Heart right ventricle (tissue), 16 donors: ENCODE measurements at regions of chr16 and their contacts with region 1.

Region 1: GRCh38 chr16:10579965-10580882 is at the start of gene EMP2:
- DNase-seq: peak; percentile 86 to 89
- ATAC-seq: peak; percentile 87 to 92 (median 88)
- H3K4me3 ChIP-seq: peak within 1 kb of the TSS; percentile 80 to 98 (median 88)
- H3K27ac ChIP-seq: peak within 1 kb of the TSS; percentile 92 to 99 (median 97)
- H3K4me1 ChIP-seq: peaks cover 25 to 54% (median 44%) of the 10 kb centered on the region in 9 donors
- H3K27me3 ChIP-seq: peaks cover 0 to 32% (median 0%) of the 10 kb centered on the region in 7 donors
- CTCF ChIP-seq: peak; percentile 28 to 81 (median 64)
- total RNA-seq, gene EMP2: 44.6 to 108 (median 62.0) TPM

Region 2: DNA sequence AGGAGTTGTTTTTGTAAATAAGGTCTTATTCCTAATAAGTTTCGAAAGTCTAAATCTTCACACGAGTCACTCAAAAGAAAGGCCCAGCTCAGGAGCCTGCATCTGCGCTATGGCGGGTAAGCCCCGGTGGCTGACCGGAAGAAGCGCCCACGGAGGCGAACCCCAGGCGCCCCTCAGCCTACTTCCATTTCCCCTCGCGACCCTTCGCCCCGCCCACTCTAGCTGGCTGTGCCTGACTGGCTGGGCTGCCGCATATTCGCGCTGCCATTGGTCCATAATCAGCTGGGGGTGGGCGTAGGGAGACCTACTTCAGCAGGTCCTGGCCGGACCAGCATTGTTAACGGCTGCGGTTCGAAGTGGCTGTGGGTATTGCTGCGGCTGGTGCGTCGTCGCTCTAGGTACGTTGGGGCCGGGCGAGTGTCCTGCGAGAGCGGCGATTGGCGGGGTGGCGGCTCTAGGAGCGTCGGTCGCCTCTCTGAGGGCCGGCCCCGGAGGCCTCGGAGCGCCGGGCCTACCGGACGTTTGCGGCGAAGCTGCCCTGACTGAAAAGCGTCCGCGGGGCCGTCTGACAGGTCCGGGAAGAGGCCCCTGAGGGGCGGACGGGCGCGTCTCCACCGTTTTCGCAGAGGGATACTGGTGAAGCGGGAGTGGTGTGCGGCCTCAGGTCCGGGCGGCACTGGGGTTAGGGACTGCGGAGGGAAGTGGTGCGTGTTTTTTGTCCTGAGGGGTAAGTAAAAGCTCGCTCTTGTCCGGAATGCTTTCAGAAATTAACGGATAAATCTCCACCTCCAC is 194.3 kb before region 1 on chr16 and contains the start of gene ATF7IP2:
- intact Hi-C with region 1: no loop called
- DNase-seq: peak; percentile 91 to 95
- ATAC-seq: peak; percentile 97 to 100 (median 99)
- H3K4me3 ChIP-seq: peak within 1 kb of the TSS; percentile 49 to 82 (median 76)
- H3K27ac ChIP-seq: peak within 1 kb of the TSS; percentile 11 to 92 (median 86)
- H3K4me1 ChIP-seq: peaks cover 0 to 29% (median 12%) of the 10 kb centered on the region in 9 donors
- H3K27me3 ChIP-seq: no peaks in the 10 kb centered on the region
- CTCF ChIP-seq: no peak
- total RNA-seq, gene ATF7IP2: 19.4 to 62.6 (median 35.8) TPM

Region 3: DNA sequence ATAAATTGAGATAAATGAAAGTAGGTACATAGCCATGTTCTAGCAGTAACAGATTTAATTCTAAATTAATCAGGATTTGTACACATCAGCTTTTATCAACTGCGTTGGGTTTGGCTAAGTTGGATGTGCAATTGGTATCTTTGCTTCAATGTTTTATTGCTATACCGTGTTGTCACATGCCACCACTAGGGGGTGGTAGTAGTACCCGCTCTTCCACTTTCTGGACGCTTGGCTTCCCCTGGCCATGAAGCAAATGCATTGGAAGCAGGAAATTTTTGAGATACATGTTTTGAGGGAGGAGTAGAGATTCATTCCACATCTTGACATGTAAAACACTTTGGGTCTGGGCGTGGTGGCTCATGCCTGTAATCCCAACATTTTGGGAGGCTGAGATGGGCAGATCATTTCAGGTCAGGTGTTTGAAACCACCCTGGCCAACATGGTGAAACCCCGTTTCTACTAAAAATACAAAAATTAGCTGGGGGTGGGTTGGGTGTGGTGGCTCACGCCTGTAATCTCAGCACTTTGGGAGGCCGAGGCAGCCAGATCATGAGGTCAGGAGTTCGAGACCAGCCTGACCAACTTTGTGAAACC is 58.4 kb before region 1 on chr16:
- intact Hi-C with region 1: loop called in 3 of 10 experiments (anchors 5 to 10 kb)
- DNase-seq: peak in 1 of 2 donors; percentile 58
- ATAC-seq: peak; percentile 49 to 86 (median 78)
- H3K4me3 ChIP-seq: no peak overlapping the region
- H3K27ac ChIP-seq: no peak overlapping the region
- H3K4me1 ChIP-seq: peaks cover 0 to 6% (median 0%) of the 10 kb centered on the region in 9 donors
- H3K27me3 ChIP-seq: no peaks in the 10 kb centered on the region
- CTCF ChIP-seq: peak; percentile 74 to 92 (median 83)

Region 4: DNA sequence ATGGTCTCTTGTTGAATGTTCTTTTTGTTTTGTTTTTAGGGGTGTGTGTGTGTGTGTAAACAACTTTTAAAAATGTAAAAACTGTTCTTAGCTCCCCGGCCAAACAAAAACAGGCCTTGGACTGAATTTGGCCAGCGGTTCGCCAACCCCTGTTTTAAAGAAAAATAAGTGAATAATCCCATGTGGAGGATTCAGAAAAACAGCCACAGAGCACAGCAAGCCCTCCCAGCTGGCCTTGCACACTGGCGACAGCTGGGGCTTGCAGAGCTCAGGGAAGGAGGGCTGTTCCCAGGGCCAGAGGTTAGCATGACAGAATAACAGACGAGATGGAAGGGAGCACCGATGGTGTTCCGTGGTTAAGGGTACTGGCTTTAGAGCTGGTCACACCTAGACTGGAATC is 38.9 kb before region 1 on chr16:
- intact Hi-C with region 1: no loop called
- DNase-seq: no peak
- ATAC-seq: peak in 6 of 8 donors; percentile 46 to 85 (median 72)
- H3K4me3 ChIP-seq: no peak overlapping the region
- H3K27ac ChIP-seq: peak overlapping the region in 4 of 10 donors; percentile 14 to 53 (median 34)
- H3K4me1 ChIP-seq: peaks cover 0 to 15% (median 0%) of the 10 kb centered on the region in 9 donors
- H3K27me3 ChIP-seq: no peaks in the 10 kb centered on the region
- CTCF ChIP-seq: no peak

Region 5: DNA sequence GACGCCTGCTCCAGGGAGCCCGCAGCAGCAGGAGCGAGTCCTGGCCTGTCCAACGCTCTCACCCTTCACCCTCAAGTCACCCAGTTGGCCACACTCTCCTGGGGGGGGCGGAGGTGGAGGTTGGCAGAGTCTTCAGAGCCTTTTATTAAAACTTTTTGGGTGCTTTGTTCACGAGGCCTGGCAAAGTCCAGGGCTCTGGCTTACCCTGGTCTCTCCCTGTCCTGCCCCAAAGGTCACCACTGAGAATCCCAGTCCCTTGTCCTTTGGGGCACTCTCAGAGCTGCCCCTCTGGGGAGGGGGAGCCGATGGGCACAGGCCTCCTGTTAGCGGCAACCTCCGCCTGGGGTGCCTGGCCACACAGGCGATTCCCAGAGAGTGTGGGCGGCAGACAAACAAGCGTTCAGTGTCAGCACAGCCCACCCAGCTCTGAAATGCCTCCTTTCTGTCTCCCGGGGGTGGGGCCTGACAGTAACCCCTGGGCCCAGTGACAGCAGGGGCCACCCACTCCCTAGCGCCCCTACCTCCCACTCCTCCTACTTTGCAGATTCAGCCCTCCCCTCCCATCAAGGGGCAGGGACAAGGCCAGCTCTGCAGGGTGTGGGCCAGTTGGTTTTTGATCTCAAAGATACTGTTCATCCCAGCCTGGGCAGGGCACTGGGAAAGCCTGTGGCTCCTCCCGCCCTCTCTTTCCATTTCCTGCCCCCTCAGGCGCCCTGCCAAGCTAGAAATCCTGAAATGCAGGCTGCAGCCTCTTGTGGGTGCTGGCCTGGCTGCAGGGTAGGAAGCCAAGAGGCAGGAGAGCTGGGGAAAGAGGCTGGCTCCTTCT is 36.7 kb after region 1 on chr16:
- intact Hi-C with region 1: loop called in 5 of 10 experiments (anchors 2 to 5 kb)
- DNase-seq: peak; percentile 76 to 79
- ATAC-seq: peak; percentile 64 to 85 (median 81)
- H3K4me3 ChIP-seq: peak overlapping the region in 1 of 10 donors; percentile 8
- H3K27ac ChIP-seq: peak overlapping the region; percentile 39 to 87 (median 68)
- H3K4me1 ChIP-seq: peaks cover 10 to 44% (median 33%) of the 10 kb centered on the region in 9 donors
- H3K27me3 ChIP-seq: no peaks in the 10 kb centered on the region
- CTCF ChIP-seq: peak in 4 of 9 donors; percentile 20 to 39 (median 37)

Region 6: GRCh38 chr16:10688341-10689125 is 108.3 kb after region 1 on chr16:
- intact Hi-C with region 1: no loop called
- DNase-seq: no peak
- ATAC-seq: no peak
- H3K4me3 ChIP-seq: no peak overlapping the region
- H3K27ac ChIP-seq: no peak overlapping the region
- H3K4me1 ChIP-seq: peaks cover 0 to 9% (median 0%) of the 10 kb centered on the region in 9 donors
- H3K27me3 ChIP-seq: no peaks in the 10 kb centered on the region
- CTCF ChIP-seq: no peak

Region 7: DNA sequence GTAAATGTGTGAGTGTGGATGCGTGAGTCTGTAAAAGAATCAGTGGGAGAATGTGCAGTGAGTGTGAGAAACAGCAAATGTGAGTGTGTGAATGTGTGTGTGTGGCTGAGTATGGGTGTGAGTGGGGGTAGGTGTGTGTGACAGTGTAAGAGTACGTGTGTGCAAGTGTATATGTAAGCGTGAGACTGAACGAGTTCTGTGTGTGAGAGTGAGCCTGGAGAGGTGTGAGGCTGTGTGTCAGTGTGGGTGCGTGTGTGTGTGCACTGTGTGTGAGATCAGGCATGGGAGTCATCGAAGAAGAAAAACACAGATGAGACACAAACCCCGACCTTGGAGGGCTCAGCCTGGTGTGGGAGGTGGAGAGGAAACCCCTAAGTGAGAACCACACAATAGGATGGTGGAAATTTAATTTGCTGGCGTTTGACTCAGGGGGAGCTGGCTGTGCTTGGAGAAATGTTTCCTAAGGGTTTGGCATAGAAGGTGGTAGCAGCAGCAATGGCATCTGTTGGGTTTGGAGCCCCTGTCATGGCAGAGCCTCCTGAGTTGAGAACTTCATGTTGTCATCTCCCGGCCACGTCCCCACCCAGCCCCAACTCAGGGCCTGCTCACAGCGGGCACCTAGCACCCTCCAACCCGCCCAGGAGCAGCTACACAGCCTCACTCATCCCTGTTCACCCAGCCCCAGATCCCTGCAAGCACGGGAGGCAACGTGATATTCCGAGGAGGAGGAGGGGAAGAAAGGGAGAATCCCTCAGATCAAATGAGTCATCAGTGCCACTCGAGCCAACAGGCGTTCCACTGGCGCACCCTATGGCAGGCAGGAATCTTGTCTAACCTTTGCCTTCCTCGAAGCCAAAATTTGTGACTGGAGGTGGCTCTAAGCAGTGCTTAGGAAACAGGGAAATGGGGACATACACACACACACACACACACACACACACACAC is 149.2 kb after region 1 on chr16:
- intact Hi-C with region 1: loop called in 1 of 10 experiments (anchors 2 kb)
- DNase-seq: no peak
- ATAC-seq: peak in 4 of 8 donors; percentile 22 to 79 (median 60)
- H3K4me3 ChIP-seq: no peak overlapping the region
- H3K27ac ChIP-seq: no peak overlapping the region
- H3K4me1 ChIP-seq: peaks cover 0 to 5% (median 0%) of the 10 kb centered on the region in 9 donors
- H3K27me3 ChIP-seq: no peaks in the 10 kb centered on the region
- CTCF ChIP-seq: no peak

Region 8: GRCh38 chr16:10776280-10776679 is 196.1 kb after region 1 on chr16:
- intact Hi-C with region 1: no loop called
- DNase-seq: no peak
- ATAC-seq: no peak
- H3K4me3 ChIP-seq: no peak overlapping the region
- H3K27ac ChIP-seq: no peak overlapping the region
- H3K4me1 ChIP-seq: peaks cover 0 to 9% (median 0%) of the 10 kb centered on the region in 9 donors
- H3K27me3 ChIP-seq: no peaks in the 10 kb centered on the region
- CTCF ChIP-seq: no peak